AG04450 (cell line): ENCODE measurements at regions of chr19 and their contacts with region 1.

Region 1: GRCh38 chr19:14136509-14137281 is at the start of gene ASF1B:
- DNase-seq: peak; percentile 100
- H3K4me3 ChIP-seq: peak within 1 kb of the TSS; percentile 79
- H3K27ac ChIP-seq: peak within 1 kb of the TSS; percentile 87
- H3K27me3 ChIP-seq: no peaks in the 10 kb centered on the region
- CTCF ChIP-seq: peak; percentile 73
- polyA plus RNA-seq, gene ASF1B: 2.8 and 2.9 TPM in 2 replicates

Region 2: DNA sequence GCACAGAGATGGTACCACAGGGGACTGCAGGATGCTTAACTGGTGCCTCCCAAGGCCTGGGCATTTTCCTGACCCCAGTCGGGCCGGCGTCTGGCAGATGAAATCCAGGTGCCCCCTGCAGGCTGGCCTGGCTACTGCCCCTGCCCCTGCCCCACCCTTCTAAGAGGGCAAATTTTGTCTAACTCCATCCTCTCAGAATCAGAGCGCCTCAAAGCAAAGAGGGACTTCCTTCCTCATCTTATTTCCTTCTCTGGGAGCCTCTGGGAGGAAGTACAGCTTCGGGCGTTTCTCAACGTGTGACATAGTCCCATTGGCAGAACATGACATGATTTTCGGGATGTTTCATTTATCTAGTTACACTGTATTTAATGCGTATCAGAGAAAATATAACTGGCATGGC is 21.8 kb before region 1 on chr19:
- CTCF ChIA-PET with region 1: interaction called, 18 read pairs
- POLR2A ChIA-PET with region 1: interaction called, 6 read pairs
- DNase-seq: no peak
- H3K4me3 ChIP-seq: no peak overlapping the region
- H3K27ac ChIP-seq: no peak overlapping the region
- H3K27me3 ChIP-seq: no peaks in the 10 kb centered on the region
- CTCF ChIP-seq: peak; percentile 49

Region 3: DNA sequence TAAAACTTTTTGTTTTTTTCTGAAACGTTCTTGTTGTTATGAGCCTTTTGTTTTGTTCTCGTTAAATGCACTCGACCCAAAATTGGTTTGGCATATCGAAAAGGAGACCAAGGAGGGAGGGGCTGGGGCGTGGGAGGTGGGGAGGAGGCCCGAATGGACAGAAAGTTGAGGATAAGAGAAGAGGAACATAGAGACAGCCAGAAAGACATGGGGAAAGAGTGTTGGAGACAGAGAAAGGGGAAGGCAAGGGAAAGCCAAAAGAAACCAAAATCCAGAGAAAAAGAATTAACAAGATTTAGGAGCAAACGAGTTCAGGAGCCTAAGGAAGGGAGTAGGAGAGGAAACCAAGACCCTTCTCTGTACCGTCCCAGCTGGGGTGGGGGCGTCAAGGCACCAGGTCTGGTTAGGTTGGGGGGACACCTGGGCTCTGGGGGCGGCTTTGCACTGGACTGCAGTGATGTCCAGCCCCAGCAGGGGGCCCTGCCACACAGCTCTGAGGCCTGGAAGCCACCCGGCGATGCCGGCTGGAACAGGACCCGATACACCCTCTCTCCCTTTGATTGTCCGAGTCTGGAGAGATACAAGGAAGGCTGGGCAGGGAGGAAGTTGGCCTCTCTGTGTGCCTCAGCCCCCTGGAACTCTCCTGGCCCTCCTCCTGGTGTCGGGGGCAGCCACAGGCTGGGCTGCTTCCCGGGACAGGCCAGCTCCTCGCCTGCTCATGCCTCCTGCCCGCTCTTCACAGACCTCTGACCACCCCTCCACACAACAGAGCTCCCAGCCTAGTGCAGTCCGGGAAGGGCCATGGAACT is 11.3 kb after region 1 on chr19:
- CTCF ChIA-PET with region 1: interaction called, 21 read pairs
- POLR2A ChIA-PET with region 1: interaction called, 3 read pairs
- DNase-seq: peak; percentile 15
- H3K4me3 ChIP-seq: no peak overlapping the region
- H3K27ac ChIP-seq: no peak overlapping the region
- H3K27me3 ChIP-seq: no peaks in the 10 kb centered on the region
- CTCF ChIP-seq: peak; percentile 89

Region 4: GRCh38 chr19:14354445-14354844 is 217.8 kb after region 1 on chr19:
- CTCF ChIA-PET with region 1: interaction called, 41 read pairs
- POLR2A ChIA-PET with region 1: interaction called, 4 read pairs
- DNase-seq: no peak
- H3K4me3 ChIP-seq: no peak overlapping the region
- H3K27ac ChIP-seq: no peak overlapping the region
- H3K27me3 ChIP-seq: peaks cover 9% of the 10 kb centered on the region
- CTCF ChIP-seq: no peak

Region 5: DNA sequence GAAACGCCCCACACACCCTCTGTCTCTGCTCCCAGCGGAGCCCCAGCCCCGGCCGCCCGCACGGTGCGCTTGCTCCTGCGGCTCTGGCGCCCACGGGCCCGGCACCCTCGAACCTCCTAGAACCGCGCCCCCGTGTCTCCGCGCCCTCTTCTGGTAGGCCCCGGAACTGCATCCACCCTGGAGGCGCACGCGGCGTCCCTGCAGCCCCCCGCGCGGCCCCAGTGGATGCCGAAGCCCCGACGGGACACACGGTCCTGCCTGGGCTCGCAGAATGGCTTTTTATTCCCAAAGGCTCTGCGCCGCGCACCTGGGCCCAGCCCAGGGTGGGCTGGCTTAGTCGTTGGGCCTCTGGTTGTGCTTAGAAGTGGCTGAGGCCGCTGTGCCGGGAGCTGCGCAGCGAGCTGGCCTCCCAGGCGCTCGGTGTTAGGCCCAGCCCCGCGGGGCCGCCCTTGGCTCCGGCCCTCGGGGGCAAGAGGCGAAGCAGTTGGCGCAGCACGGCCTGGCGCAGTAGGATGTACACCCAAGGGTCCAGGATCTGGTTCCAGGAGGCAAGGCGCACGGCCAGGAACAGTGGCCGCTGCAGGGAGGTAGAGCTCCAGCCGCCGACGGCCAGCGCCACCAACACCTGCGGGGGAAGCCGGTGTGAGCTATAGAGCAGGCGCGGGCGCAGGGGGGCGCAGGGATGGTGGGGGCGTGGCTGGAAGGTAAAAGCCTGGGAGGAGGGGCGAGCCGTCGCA is 335.7 kb after region 1 on chr19:
- CTCF ChIA-PET with region 1: interaction called, 14 read pairs
- POLR2A ChIA-PET with region 1: interaction called, 3 read pairs
- DNase-seq: no peak
- H3K4me3 ChIP-seq: no peak overlapping the region
- H3K27ac ChIP-seq: no peak overlapping the region
- H3K27me3 ChIP-seq: no peaks in the 10 kb centered on the region
- CTCF ChIP-seq: peak; percentile 80